ENCODE measurements at regions of chr1 and their contacts with region 1.

Region 1: GRCh38 chr1:185238447-185238846 is 78.6 kb downstream of the IVNS1ABP start:
- DNase-seq: no peak
- H3K4me3 Mint-ChIP-seq: no peak overlapping the region
- H3K27ac Mint-ChIP-seq: no peak overlapping the region
- H3K4me1 Mint-ChIP-seq: peaks cover 27% of the 10 kb centered on the region
- H3K27me3 Mint-ChIP-seq: no peaks in the 10 kb centered on the region

Region 2: DNA sequence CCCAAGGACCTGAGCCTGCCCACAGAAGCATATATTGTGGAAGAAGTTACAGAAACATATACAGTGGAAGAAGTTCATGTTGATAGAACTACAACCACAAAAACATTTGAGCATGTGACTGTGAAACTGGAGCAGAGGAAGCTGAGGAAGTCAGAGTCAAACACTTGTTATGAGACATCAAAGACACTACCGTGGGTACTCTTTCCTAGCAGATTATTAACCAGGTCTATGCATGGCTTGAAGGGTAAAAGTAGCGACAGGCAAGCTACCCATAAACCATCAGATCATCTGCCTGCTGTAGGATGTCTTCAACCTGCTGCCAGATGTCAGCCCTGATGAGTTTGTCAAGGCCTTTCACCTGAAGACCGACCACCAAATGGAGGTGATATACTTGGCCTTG is 42.8 kb after region 1 on chr1:
- CTCF ChIA-PET with region 1: interaction called, 4 read pairs
- intact Hi-C with region 1: loop called (anchors 2 kb)
- DNase-seq: peak; percentile 24
- H3K4me3 Mint-ChIP-seq: peak overlapping the region; percentile 8
- H3K27ac Mint-ChIP-seq: peak overlapping the region; percentile 77
- H3K4me1 Mint-ChIP-seq: peaks cover 59% of the 10 kb centered on the region
- H3K27me3 Mint-ChIP-seq: no peaks in the 10 kb centered on the region

Region 3: DNA sequence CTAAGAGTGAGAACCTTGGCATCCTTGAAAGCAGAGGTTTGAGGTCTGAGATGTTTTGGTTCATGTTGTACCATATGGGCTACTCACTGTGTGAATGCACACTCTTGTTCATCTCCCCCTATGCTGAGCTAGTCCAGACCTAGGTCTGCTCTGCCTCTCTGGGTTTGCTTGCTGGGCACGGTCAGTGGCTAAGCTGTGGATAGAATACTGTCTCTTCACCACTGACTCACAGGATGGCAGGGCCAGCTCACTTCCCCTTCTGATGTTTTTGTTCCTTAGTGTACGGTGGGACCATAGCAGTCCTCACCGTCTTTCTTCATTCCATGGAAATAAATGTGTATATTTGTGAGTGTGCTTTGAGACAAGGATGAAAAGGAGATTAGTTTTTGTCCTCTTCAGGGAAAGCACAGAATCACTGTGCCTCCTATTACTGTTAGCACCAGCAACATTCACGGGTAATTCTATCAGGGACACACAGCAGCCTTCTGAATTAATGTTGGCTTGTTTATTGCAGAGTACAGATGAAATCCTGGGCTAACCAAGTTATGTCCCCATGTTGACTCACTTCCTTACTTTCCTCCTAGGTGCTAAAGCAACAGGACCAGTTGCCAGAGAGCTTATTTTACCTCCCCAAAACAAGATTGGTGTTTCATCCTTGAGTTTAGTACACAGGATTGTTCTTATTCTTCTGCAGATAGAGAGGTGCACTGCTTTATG is 135.5 kb after region 1 on chr1:
- CTCF ChIA-PET with region 1: no interaction called
- intact Hi-C with region 1: no loop called
- DNase-seq: no peak
- H3K4me3 Mint-ChIP-seq: no peak overlapping the region
- H3K27ac Mint-ChIP-seq: no peak overlapping the region
- H3K4me1 Mint-ChIP-seq: no peaks in the 10 kb centered on the region
- H3K27me3 Mint-ChIP-seq: no peaks in the 10 kb centered on the region

Region 4: GRCh38 chr1:185551008-185551407 is 312.6 kb after region 1 on chr1:
- CTCF ChIA-PET with region 1: no interaction called
- intact Hi-C with region 1: no loop called
- DNase-seq: no peak
- H3K4me3 Mint-ChIP-seq: no peak overlapping the region
- H3K27ac Mint-ChIP-seq: no peak overlapping the region
- H3K4me1 Mint-ChIP-seq: no peaks in the 10 kb centered on the region
- H3K27me3 Mint-ChIP-seq: no peaks in the 10 kb centered on the region

Region 5: GRCh38 chr1:185566995-185567394 is 328.5 kb after region 1 on chr1:
- CTCF ChIA-PET with region 1: interaction called, 3 read pairs
- intact Hi-C with region 1: loop called (anchors 2 kb)
- DNase-seq: peak; percentile 57
- H3K4me3 Mint-ChIP-seq: no peak overlapping the region
- H3K27ac Mint-ChIP-seq: peak overlapping the region; percentile 70
- H3K4me1 Mint-ChIP-seq: peaks cover 68% of the 10 kb centered on the region
- H3K27me3 Mint-ChIP-seq: no peaks in the 10 kb centered on the region

Region 6: DNA sequence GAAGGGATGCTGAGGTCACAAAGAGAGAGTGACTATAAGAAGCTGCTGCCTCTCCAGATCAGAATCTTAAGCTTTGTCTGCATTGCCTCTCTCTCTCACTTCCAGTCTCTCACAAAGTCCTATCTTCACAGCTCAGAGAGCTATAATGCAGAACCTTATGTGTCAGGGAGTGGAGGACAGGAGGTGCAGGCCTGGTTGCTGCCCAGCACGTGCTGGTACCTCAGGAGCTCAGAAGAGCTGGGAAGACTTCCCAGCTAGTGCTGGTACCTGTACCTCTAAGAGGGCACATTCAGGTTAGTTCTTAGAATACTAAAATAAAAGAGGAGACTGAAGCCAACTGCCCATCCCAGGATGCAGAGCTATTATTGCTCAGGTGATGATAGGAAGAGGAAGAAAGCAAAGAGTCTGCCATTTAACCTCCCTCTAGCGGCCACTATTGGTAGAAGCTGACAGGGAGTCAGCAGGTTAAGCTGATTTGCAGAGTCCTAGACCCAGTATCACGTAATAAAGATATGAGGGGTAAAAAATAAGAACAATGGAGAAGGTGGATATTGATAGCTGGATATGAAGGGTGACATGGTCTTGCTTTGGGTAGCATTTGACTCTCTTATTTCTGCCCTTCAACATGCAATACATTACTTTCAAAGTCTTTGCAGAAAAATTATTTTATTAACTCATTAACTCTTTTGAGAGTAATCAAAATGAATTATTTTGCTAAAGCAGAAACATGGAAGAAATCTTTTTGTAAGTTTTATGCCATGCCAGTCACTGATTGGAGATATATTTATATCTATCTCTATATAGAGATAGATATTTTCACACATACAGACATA is 357.6 kb after region 1 on chr1:
- CTCF ChIA-PET with region 1: no interaction called
- intact Hi-C with region 1: loop called (anchors 2 kb)
- DNase-seq: peak; percentile 65
- H3K4me3 Mint-ChIP-seq: no peak overlapping the region
- H3K27ac Mint-ChIP-seq: no peak overlapping the region
- H3K4me1 Mint-ChIP-seq: peaks cover 19% of the 10 kb centered on the region
- H3K27me3 Mint-ChIP-seq: no peaks in the 10 kb centered on the region

Region 7: DNA sequence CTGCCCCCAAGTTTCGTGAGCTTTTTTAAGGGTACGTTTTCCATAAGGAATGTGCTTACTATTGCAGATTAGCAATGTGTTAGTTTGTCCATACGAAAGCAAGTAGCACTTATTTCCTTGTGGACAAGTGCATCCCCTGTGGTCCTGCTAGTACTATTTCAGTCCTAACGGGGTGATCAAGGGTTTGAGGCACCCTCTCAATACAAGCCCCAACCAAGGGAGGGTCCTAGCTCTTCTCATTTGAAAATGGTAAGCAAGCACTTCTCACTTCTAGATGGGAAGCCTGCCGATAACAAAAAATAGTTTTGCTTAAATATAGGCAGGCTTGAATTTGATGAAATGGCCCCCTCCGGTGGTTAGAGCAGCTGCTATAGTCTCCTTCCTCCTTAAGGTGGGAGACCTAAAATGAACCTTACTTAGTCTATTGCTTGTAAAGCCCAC is 431.8 kb after region 1 on chr1:
- CTCF ChIA-PET with region 1: interaction called, 11 read pairs
- intact Hi-C with region 1: loop called (anchors 1 kb)
- DNase-seq: peak; percentile 69
- H3K4me3 Mint-ChIP-seq: no peak overlapping the region
- H3K27ac Mint-ChIP-seq: no peak overlapping the region
- H3K4me1 Mint-ChIP-seq: peaks cover 14% of the 10 kb centered on the region
- H3K27me3 Mint-ChIP-seq: no peaks in the 10 kb centered on the region

Region 8: GRCh38 chr1:185694081-185694480 is 455.6 kb after region 1 on chr1:
- CTCF ChIA-PET with region 1: no interaction called
- intact Hi-C with region 1: loop called (anchors 1 kb)
- DNase-seq: peak; percentile 45
- H3K4me3 Mint-ChIP-seq: peak overlapping the region; percentile 65
- H3K27ac Mint-ChIP-seq: peak overlapping the region; percentile 22
- H3K4me1 Mint-ChIP-seq: peaks cover 12% of the 10 kb centered on the region
- H3K27me3 Mint-ChIP-seq: no peaks in the 10 kb centered on the region

Region 9: DNA sequence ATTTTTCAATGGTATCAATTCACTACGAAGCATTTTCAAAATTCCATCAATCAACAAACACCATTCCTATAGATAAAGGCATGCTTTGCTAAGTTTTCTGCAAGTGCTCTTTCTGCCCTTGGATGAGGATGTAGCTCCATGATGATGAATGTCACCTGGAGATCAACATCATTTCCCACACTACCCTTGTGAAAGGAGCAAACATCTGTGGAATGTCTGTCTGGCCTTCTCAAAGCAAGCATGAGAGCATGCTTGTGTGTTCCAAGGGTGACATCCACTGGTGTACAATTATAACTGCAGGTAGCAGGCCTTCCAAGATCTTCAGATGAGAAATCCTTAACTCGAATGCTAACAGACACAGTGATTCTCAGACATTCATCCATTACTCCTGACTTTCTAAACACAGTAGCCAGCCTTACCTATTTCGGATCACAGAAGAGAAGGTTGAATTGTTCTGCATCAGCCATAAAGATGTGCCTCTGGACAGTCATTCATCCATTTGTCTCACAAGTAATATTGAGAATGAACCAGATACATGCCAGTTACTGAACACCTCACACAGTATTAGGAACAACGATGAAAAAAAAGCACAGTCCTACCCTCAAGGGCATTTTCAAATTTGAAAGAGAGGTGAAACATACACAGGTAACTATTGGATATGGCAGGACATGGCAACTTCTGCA is 974.2 kb after region 1 on chr1:
- CTCF ChIA-PET with region 1: no interaction called
- intact Hi-C with region 1: loop called (anchors 5 kb)
- DNase-seq: peak; percentile 45
- H3K4me3 Mint-ChIP-seq: no peak overlapping the region
- H3K27ac Mint-ChIP-seq: no peak overlapping the region
- H3K4me1 Mint-ChIP-seq: no peaks in the 10 kb centered on the region
- H3K27me3 Mint-ChIP-seq: peaks cover 38% of the 10 kb centered on the region

Measured in activated naive CD4-positive, alpha-beta T cell treated with anti-CD3 and anti-CD28 coated beads for 36 hours (primary cell).